Gastrocnemius medialis (tissue), 4 donors: ENCODE measurements at regions of chr17 and their contacts with region 1.

Region 1: DNA sequence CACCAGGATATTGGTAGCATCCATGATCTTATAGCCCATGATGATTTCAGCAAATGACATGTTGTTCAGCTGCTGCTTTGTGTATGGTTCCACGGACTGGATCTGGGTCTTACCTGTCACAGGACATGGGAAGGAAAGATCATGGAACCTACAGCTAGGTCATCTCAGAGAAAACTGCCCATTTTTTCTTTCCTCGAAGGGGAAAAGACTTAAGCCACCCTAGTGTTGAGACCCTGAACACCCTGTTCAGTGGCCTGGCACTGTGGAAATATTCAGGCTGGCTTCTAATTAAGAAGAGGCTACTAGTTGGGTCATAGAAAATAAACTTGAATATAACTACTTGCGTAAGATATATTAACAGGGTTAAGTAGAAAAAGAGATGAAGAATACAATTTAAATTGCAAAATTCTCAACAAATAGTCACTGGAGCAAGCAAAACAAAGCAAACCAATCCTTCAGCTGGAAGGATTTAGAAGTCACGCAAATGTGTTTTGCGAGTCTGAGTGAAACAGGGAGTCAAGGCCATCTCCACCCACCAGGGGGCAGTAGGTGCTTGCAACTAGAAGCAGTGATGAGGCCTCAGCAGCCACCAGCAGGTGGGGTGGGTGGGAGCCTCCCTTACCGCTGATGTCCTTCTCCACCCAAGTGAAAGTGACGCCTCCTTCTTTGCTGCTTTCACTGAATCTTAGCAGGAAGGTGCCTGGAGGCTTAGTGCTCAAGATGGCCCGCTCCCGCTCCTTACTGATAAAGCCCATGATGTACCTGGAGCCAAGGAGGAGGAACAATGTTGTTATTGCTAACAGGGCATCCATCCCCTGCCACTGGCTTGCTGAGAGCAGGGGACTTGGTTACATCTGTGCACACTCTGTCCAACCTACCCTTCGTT is 34.3 kb downstream of the STAT5A start:
- DNase-seq: peak; percentile 85 to 93
- ATAC-seq: peak; percentile 77 to 79
- H3K4me3 ChIP-seq: no peak overlapping the region
- H3K27ac ChIP-seq: peak overlapping the region; percentile 1 to 49 (median 44)
- H3K4me1 ChIP-seq: peaks cover 8 to 22% of the 10 kb centered on the region in 2 donors
- H3K27me3 ChIP-seq: no peaks in the 10 kb centered on the region
- CTCF ChIP-seq: peak; percentile 98 to 100 (median 99)
- POLR2A ChIP-seq: no peak

Region 2: GRCh38 chr17:42112552-42113176 is 210.0 kb before region 1 on chr17 and contains the start of gene DHX58:
- in situ Hi-C with region 1: no loop called
- intact Hi-C with region 1: no loop called
- DNase-seq: peak; percentile 59 to 70
- ATAC-seq: peak; percentile 86 to 87
- H3K4me3 ChIP-seq: peak within 1 kb of the TSS; percentile 52 to 66 (median 64)
- H3K27ac ChIP-seq: peak within 1 kb of the TSS; percentile 85 to 93 (median 87)
- H3K4me1 ChIP-seq: peaks cover 16% of the 10 kb centered on the region in 2 donors
- H3K27me3 ChIP-seq: no peaks in the 10 kb centered on the region
- CTCF ChIP-seq: no peak
- POLR2A ChIP-seq: peak; percentile 24 to 35
- total RNA-seq, gene DHX58: 1.1 to 4.4 (median 3.1) TPM

Region 3: DNA sequence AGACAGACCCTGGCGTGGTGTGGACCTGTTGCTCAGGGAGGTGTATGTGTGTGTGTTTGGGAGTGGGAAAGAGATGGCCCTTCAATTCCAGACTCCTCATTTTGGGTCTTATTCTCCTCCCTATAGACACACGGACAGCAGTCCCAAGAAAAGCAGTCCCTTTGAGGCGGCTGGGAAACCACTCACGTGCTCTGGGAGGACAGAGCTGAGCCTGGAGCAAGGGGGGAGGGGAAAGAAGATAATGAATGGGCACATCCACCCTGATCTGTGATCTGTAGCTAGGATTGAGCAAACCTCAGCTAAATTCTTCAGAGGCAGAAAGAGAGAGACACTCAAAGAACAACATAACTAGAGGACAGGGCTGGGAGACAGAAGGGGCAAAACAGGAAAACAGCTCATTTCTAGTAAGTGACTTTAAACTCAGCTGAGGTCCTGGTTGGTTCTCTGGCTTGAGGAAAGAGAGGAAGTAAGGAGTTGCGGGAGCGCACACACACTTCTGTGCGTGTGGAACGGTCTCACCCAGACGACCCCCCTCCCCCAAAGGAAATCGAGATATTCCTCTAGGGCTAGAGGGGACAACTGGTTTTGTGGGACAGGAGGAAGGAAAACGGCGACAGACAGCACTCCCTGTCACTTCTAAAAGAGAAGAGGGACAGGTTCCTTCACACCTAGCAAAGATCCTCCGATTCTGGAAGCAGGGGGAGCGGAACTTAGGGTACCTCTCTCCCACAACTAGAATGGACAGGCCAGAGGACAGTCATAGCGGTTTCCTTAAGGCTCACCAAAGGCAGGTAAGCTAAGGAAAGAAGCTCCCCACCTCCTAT is 168.5 kb before region 1 on chr17:
- in situ Hi-C with region 1: no loop called
- intact Hi-C with region 1: no loop called
- DNase-seq: peak in 1 of 2 donors; percentile 29
- ATAC-seq: peak; percentile 22 to 32
- H3K4me3 ChIP-seq: peak overlapping the region; percentile 84 to 93 (median 86)
- H3K27ac ChIP-seq: peak overlapping the region; percentile 85 to 94 (median 91)
- H3K4me1 ChIP-seq: peaks cover 26% of the 10 kb centered on the region in 2 donors
- H3K27me3 ChIP-seq: no peaks in the 10 kb centered on the region
- CTCF ChIP-seq: no peak
- POLR2A ChIP-seq: no peak

Region 4: GRCh38 chr17:42517516-42517915 is 194.9 kb after region 1 on chr17:
- in situ Hi-C with region 1: no loop called
- intact Hi-C with region 1: loop called (anchors 5 kb)
- DNase-seq: peak; percentile 54 to 81
- ATAC-seq: peak; percentile 14 to 24
- H3K4me3 ChIP-seq: no peak overlapping the region
- H3K27ac ChIP-seq: peak overlapping the region; percentile 77 to 89 (median 86)
- H3K4me1 ChIP-seq: peaks cover 57 to 65% of the 10 kb centered on the region in 2 donors
- H3K27me3 ChIP-seq: no peaks in the 10 kb centered on the region
- CTCF ChIP-seq: peak; percentile 69 to 88 (median 85)
- POLR2A ChIP-seq: no peak

Region 5: DNA sequence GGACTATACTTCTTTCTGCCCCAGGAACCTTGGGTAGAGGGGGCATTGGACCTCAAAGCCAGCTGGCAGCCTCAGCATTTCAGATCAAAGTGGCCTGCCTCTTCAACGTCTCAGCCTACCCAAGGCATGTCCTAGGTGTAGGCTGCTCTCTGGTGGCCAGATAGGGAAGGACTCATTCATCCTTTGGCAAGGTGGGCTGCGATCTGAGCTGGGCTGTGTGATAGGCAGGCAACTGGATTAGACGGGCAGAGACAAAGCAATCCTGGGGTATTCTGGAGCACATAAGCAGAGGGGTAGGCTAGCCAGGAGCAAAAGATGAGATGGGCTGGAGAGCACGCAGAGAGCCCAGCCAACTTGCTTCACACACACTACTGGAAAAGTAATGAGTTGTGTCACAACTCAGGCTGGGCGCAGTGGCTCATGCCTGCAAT is 204.7 kb after region 1 on chr17:
- in situ Hi-C with region 1: loop called in 3 of 4 experiments (anchors 5 kb)
- intact Hi-C with region 1: loop called (anchors 1 kb)
- DNase-seq: peak; percentile 59 to 85
- ATAC-seq: peak; percentile 72 to 75
- H3K4me3 ChIP-seq: no peak overlapping the region
- H3K27ac ChIP-seq: peak overlapping the region; percentile 77 to 89 (median 86)
- H3K4me1 ChIP-seq: peaks cover 31 to 38% of the 10 kb centered on the region in 2 donors
- H3K27me3 ChIP-seq: no peaks in the 10 kb centered on the region
- CTCF ChIP-seq: peak; percentile 81 to 88 (median 83)
- POLR2A ChIP-seq: no peak